Endothelial cell of umbilical vein (primary cell): ENCODE measurements at regions of chr5 and their contacts with region 1.

Region 1: DNA sequence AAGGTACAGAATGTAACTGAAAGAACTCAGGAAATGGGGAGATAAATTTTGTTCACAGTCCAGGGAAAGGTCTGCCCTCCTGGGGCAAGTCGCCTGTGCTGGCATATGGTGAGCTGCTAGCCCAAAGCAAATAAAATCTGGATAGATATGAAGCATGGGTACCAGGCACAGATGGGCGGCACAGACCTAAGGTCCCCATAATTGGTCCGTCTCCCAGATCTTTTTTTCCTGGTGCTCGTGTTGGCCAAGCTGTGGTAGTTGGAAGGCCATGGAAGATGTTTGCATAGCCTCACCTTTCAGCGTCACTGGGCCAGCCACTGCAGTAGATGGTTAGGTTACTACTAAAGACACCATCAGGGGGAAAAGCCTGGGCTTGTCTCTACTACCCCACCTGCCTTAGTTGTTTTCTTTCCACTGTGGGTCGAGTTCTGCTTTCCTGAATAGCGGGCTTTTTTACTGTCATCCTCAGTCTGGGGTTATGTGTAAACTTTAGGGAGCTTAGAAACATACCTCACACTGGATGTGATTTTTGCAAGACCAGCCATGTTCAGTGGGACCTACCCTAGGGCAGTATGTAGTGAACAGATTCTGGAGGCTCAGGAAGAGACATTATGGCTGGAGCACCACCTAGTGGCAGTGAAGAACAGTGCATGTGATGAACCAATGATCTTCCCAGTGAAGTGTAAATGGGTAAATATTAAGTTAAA is 24.2 kb upstream of the GLRX start:
- DNase-seq: peak; percentile 79
- H3K4me3 ChIP-seq: no peak overlapping the region
- H3K27ac ChIP-seq: no peak overlapping the region
- H3K4me1 ChIP-seq: no peaks in the 10 kb centered on the region
- H3K27me3 ChIP-seq: no peaks in the 10 kb centered on the region
- CTCF ChIP-seq: peak; percentile 80 to 88
- POLR2A ChIP-seq: no peak

Region 2: DNA sequence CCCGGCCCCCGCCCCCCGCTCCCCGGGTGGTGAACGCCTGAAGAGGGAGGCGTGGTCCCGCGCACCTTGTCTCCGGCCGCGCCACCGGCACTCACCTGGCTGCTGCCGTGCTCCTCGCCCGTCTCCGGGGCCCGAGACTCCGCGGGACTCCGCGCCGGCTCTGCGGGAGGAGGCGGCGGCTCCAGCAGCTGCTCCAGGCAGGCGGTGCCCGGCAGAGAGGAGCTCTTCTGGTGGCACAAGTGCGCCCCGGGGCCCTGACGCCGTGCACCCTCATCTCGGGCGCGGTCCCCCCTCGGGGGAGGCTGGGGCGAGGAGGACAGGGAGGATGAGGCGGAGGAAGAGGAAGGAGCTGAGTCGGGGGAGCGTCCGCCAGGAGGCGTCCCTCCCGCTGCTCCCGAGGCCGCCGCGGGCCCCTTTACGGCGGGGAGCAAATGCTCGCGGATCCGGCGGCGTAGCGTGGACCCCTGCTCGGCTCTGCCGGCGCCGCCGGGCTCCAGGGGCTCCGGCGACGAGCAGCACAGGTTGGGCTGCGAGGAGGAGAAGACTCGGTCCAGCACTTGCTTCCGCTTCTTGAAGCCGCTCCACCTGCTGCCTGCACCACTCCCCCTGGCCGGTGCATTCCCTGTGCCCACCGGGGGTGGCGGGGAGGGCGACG is 562.8 kb before region 1 on chr5:
- CTCF ChIA-PET with region 1: interaction called, 3 read pairs
- POLR2A ChIA-PET with region 1: no interaction called
- dilution Hi-C with region 1: no loop called
- intact Hi-C with region 1: loop called (anchors 1 kb)
- DNase-seq: peak; percentile 28
- H3K4me3 ChIP-seq: peak overlapping the region; percentile 27 to 55 (median 44)
- H3K27ac ChIP-seq: no peak overlapping the region
- H3K4me1 ChIP-seq: peaks cover 14% of the 10 kb centered on the region
- H3K27me3 ChIP-seq: peaks cover 50 to 77% of the 10 kb centered on the region in 2 experiments
- CTCF ChIP-seq: peak; percentile 38 to 58
- POLR2A ChIP-seq: no peak

Region 3: DNA sequence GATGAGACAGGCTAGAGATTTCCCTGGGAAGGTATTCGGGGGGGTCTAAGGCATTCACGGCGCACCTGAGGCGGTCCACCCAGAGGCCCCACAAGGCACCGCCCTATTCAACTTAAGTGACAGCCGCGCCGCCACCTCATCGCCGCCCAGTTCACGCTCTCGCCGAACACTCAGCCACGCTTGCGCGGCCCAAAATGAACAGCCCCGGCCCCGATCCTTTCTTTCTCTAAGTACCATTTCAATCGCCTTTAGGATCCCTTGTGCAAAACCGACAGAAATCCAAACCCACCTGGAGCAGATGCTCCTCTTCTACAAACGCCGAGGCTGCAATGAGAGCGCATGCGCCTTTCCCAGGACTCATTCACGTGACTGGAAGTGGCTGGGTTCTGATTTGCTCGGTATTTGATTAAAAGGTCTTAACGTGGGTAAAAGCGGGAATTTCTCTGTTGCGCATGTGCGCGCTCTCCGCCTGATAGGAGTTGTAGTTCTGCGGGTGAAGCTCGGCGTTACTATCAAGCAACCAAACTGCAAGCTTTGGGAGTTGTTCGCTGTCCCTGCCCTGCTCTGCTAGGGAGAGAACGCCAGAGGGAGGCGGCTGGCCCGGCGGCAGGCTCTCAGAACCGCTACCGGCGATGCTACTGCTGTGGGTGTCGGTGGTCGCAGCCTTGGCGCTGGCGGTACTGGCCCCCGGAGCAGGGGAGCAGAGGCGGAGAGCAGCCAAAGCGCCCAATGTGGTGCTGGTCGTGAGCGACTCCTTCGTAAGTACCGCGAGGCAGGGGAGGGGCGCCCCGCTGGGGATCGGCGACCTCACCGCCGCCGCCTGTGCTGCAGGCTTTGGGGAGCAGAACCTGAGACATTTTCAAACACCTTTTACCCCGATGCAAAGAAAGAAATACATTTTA is 291.8 kb before region 1 on chr5 and contains the starts of genes ARSK and SKIC3:
- CTCF ChIA-PET with region 1: interaction called, 3 read pairs
- POLR2A ChIA-PET with region 1: no interaction called
- dilution Hi-C with region 1: no loop called
- intact Hi-C with region 1: loop called (anchors 2 kb)
- DNase-seq: peak; percentile 99
- H3K4me3 ChIP-seq: peak within 1 kb of the TSS; percentile 57 to 90 (median 86)
- H3K27ac ChIP-seq: peak within 1 kb of the TSS; percentile 31
- H3K4me1 ChIP-seq: peaks cover 15% of the 10 kb centered on the region
- H3K27me3 ChIP-seq: no peaks in the 10 kb centered on the region
- CTCF ChIP-seq: peak; percentile 10 to 45
- POLR2A ChIP-seq: peak; percentile 64
- total RNA-seq, gene ARSK: 4.9 and 5.3 TPM in 2 replicates
- total RNA-seq, gene SKIC3: 92.6 and 100 TPM in 2 replicates

Region 4: DNA sequence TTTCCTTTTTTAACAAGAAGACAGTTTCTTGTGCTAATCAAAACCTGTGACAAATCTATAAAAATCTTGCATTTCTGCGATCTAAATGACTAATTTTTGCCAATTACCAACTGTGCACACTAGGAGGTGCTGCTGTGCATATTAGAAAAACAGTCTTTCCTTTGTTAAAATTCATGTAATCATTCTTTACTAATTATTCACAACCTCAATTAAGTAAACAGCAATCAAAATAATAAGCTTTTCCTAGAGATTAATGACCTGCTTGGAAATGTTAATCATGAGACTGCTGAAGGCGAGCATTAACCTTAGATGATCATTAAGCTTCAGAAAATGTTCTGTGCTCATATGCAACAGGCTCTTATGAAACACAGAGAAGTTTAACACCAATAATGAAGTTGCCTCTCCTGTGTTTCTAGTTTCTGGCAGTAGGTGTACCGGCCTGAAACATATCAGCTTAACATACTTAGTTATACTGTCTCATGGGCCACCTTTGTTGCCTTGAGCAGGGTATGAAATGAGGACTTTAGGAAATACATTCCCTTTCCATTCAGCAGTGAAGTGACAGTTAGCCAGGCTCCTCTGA is 182.4 kb before region 1 on chr5:
- CTCF ChIA-PET with region 1: interaction called, 9 read pairs
- POLR2A ChIA-PET with region 1: no interaction called
- dilution Hi-C with region 1: no loop called
- intact Hi-C with region 1: loop called (anchors 1 kb)
- DNase-seq: peak; percentile 74
- H3K4me3 ChIP-seq: no peak overlapping the region
- H3K27ac ChIP-seq: no peak overlapping the region
- H3K4me1 ChIP-seq: peaks cover 15% of the 10 kb centered on the region
- H3K27me3 ChIP-seq: no peaks in the 10 kb centered on the region
- CTCF ChIP-seq: peak; percentile 54 to 60
- POLR2A ChIP-seq: no peak

Region 5: GRCh38 chr5:95822542-95823181 is 24.0 kb before region 1 on chr5 and contains the start of gene GLRX:
- CTCF ChIA-PET with region 1: interaction called, 15 read pairs
- POLR2A ChIA-PET with region 1: interaction called, 3 read pairs
- dilution Hi-C with region 1: no loop called
- intact Hi-C with region 1: loop called (anchors 1 kb)
- DNase-seq: peak; percentile 82
- H3K4me3 ChIP-seq: peak within 1 kb of the TSS; percentile 63 to 80 (median 69)
- H3K27ac ChIP-seq: peak within 1 kb of the TSS; percentile 54
- H3K4me1 ChIP-seq: peaks cover 26% of the 10 kb centered on the region
- H3K27me3 ChIP-seq: no peaks in the 10 kb centered on the region
- CTCF ChIP-seq: no peak
- POLR2A ChIP-seq: peak; percentile 42
- total RNA-seq, gene GLRX: 13.3 and 14.2 TPM in 2 replicates

Region 6: GRCh38 chr5:95835682-95836385 is 10.9 kb before region 1 on chr5:
- CTCF ChIA-PET with region 1: interaction called, 21 read pairs
- POLR2A ChIA-PET with region 1: no interaction called
- dilution Hi-C with region 1: no loop called
- intact Hi-C with region 1: no loop called
- DNase-seq: peak; percentile 22
- H3K4me3 ChIP-seq: peak overlapping the region in 1 of 3 experiments; percentile 7
- H3K27ac ChIP-seq: no peak overlapping the region
- H3K4me1 ChIP-seq: peaks cover 21% of the 10 kb centered on the region
- H3K27me3 ChIP-seq: no peaks in the 10 kb centered on the region
- CTCF ChIP-seq: no peak
- POLR2A ChIP-seq: no peak